ENCODE measurements at regions of chr2 and their contacts with region 1.

Region 1: GRCh38 chr2:40448468-40449079 is 3.3 kb downstream of the SLC8A1 start:
- DNase-seq: no peak
- H3K4me3 ChIP-seq: no peak overlapping the region
- H3K27me3 ChIP-seq: no peaks in the 10 kb centered on the region
- CTCF ChIP-seq: peak; percentile 71

Region 2: GRCh38 chr2:40281021-40281940 is 167.3 kb before region 1 on chr2:
- CTCF ChIA-PET with region 1: interaction called, 11 read pairs
- POLR2A ChIA-PET with region 1: interaction called, 19 read pairs
- DNase-seq: peak; percentile 89
- H3K4me3 ChIP-seq: no peak overlapping the region
- H3K27me3 ChIP-seq: no peaks in the 10 kb centered on the region
- CTCF ChIP-seq: no peak

Region 3: DNA sequence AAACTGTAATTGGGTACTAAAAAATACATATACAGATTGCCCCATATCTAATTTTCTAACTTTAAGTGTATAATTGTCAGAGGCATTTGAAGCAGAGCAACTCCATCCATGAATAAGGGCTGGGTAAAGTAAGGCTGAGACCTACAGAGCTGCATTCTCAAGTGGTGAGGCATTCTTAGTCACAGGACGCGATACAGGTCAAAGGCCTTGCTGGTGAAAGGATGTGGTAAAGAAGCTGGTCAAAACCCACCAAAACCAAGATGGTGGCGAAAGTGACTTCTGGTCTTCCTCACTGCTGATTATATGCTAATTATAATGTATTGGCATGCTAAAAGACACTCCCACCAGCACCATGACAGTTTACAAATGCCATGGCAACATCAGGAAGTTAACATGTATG is 46.7 kb before region 1 on chr2:
- CTCF ChIA-PET with region 1: interaction called, 11 read pairs
- POLR2A ChIA-PET with region 1: interaction called, 5 read pairs
- DNase-seq: peak; percentile 38
- H3K4me3 ChIP-seq: no peak overlapping the region
- H3K27me3 ChIP-seq: no peaks in the 10 kb centered on the region
- CTCF ChIP-seq: no peak

Measured in BJ (cell line).